ENCODE measurements at regions of chr4 and their contacts with region 1.

Region 1: GRCh38 chr4:76148142-76148865 is at the start of gene NUP54:
- DNase-seq: peak; percentile 93
- ATAC-seq: peak; percentile 98
- H3K4me3 Mint-ChIP-seq: peak within 1 kb of the TSS; percentile 98
- H3K27ac Mint-ChIP-seq: peak within 1 kb of the TSS; percentile 94
- H3K4me1 Mint-ChIP-seq: peaks cover 33% of the 10 kb centered on the region
- H3K27me3 Mint-ChIP-seq: no peaks in the 10 kb centered on the region
- CTCF ChIP-seq: no peak
- total RNA-seq, gene NUP54: 48.1 and 58.9 TPM in 2 replicates

Region 2: GRCh38 chr4:75494563-75494962 is 653.7 kb before region 1 on chr4:
- CTCF ChIA-PET with region 1: no interaction called
- POLR2A ChIA-PET with region 1: no interaction called
- intact Hi-C with region 1: no loop called
- DNase-seq: no peak
- ATAC-seq: no peak
- H3K4me3 Mint-ChIP-seq: no peak overlapping the region
- H3K27ac Mint-ChIP-seq: no peak overlapping the region
- H3K4me1 Mint-ChIP-seq: no peaks in the 10 kb centered on the region
- H3K27me3 Mint-ChIP-seq: no peaks in the 10 kb centered on the region
- CTCF ChIP-seq: no peak

Region 3: DNA sequence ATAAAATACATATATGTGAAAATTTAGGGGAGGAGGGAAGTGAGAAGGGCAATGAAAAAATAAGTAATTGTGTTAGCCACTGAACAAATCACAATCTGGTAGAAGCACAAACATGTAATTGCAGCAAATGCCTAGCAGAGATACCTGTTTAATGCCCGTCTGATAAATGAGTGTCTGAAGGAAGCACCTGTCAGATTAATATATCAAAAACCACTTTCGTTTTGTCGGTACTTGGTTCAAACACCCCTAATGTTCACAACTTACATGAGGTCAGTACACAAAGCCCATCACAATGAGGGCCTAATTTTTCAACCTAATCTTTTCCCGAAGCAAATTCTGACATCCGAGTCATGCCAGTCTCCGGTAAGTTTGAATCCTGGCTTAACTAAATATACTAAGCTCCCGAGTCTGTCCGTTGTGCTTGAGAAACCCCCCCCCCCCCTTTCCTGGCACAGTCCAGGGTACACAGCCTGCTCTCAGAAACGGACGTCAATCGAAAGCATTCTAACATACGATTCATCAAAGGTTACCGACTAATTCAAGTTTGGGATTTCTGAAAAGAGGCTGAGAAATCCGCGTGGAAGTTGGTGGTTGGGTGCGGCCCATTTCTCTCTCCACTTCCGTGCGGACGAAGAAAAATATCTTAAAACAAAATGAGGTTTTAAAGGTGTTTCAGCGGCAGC is 158.3 kb before region 1 on chr4:
- CTCF ChIA-PET with region 1: no interaction called
- POLR2A ChIA-PET with region 1: interaction called, 6 read pairs
- intact Hi-C with region 1: loop called (anchors 1 kb)
- DNase-seq: no peak
- ATAC-seq: no peak
- H3K4me3 Mint-ChIP-seq: peak overlapping the region; percentile 95
- H3K27ac Mint-ChIP-seq: peak overlapping the region; percentile 86
- H3K4me1 Mint-ChIP-seq: peaks cover 34% of the 10 kb centered on the region
- H3K27me3 Mint-ChIP-seq: peaks cover 2% of the 10 kb centered on the region
- CTCF ChIP-seq: no peak

Region 4: GRCh38 chr4:76198411-76199237 is 50.3 kb after region 1 on chr4:
- CTCF ChIA-PET with region 1: no interaction called
- POLR2A ChIA-PET with region 1: interaction called, 4 read pairs
- intact Hi-C with region 1: loop called (anchors 2 kb)
- DNase-seq: no peak
- ATAC-seq: no peak
- H3K4me3 Mint-ChIP-seq: peak overlapping the region; percentile 1
- H3K27ac Mint-ChIP-seq: peak overlapping the region; percentile 51
- H3K4me1 Mint-ChIP-seq: peaks cover 58% of the 10 kb centered on the region
- H3K27me3 Mint-ChIP-seq: no peaks in the 10 kb centered on the region
- CTCF ChIP-seq: no peak

Region 5: DNA sequence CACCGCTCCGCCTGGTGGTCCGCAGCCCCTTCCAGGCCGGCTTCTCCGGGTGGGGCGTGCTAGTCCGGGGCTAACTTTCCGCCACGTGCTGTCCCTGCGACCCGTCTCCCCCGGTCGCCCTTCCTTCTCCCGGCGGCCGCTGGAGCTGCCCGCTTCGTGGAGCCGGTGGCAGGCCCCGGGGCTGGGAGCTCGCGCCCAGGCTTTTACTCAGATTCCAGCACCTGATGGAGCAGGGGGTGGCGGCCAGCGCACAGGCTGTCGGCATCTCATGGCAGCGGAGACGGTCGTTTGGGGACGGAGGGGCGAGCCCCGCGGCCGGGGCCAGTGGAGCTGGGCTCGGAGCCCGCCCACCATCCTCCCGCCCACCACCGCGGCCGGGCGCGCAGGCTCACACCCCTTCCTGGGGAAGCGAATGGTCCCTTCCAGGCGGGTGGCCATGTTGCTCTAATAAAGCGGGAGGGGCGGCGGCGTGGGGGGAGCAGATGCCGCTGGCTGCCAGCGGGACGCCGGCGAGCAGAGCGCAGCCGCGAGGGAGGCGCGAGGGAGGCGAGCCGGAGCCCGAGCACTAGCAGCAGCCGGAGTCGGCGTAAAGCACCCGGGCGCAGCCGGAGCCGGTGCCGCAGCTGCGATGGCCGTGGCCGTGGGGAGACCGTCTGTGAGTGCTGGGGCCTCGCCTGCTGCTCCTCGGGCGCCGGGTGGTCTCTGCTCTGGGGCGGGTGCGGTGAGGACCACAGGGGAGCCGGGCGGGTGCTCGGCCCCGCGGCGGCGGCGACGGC is 801.2 kb after region 1 on chr4 and contains the start of gene SEPTIN11:
- CTCF ChIA-PET with region 1: no interaction called
- POLR2A ChIA-PET with region 1: no interaction called
- intact Hi-C with region 1: loop called (anchors 2 kb)
- DNase-seq: peak; percentile 77
- ATAC-seq: peak; percentile 76
- H3K4me3 Mint-ChIP-seq: peak within 1 kb of the TSS; percentile 90
- H3K27ac Mint-ChIP-seq: peak within 1 kb of the TSS; percentile 68
- H3K4me1 Mint-ChIP-seq: peaks cover 15% of the 10 kb centered on the region
- H3K27me3 Mint-ChIP-seq: no peaks in the 10 kb centered on the region
- CTCF ChIP-seq: no peak
- total RNA-seq, gene SEPTIN11: 22.3 and 22.4 TPM in 2 replicates